Dendritic cell treated with granulocyte-macrophage colony-stimulating factor and Interleukin-4, amounts not matched to agents 40 ng/mL and 50 ng/mL, for 4 days (primary cell): ENCODE measurements at regions of chr7 and their contacts with region 1.

Region 1: DNA sequence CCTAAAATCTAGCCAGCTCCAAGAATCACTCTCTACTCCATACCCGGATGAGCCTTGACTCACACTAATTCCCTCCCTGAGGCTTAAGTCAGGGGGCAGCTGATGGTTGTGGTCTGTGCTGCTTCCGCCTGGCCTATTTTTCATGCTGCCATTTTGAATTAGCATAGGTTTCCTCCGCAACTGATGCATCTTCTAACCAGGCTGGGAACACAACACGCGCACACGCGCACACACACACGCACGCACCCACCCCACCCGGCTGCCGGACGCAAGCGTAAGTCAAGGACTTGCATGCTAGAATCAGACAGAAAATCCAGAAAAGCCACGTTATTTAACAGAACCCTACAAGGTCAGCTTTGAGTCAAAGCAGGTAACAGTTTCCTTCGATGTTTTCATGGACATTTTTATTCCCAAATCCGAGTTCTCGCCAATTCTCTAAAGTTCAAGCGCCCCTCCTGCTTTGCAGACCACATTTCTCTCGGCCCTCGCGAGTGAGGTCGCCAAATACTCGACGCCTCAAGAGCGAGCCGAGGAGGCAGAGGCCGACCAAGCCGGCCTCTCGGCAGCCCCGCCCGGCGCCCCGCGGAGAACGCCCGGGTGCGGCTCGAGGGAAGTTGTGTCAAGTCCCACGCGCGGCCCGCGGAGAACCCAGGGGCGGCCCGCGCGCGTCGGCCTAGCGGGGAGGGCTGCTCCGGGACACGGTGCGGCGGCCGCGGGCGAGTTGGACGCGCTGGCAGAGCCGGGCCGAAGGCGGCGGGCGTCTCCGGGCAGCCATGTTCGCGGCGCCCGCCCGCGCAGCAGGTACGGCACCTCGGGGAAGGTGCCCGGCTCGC is 961 bp downstream of the SCRN1 start:
- H3K4me3 Mint-ChIP-seq: peak overlapping the region; percentile 74
- H3K27ac Mint-ChIP-seq: peak overlapping the region; percentile 88
- H3K4me1 Mint-ChIP-seq: peaks cover 50% of the 10 kb centered on the region
- H3K27me3 Mint-ChIP-seq: peaks cover 9% of the 10 kb centered on the region

Region 2: GRCh38 chr7:29878081-29878688 is 110.5 kb before region 1 on chr7:
- intact Hi-C with region 1: no loop called
- H3K4me3 Mint-ChIP-seq: no peak overlapping the region
- H3K27ac Mint-ChIP-seq: no peak overlapping the region
- H3K4me1 Mint-ChIP-seq: peaks cover under 1% of the 10 kb centered on the region
- H3K27me3 Mint-ChIP-seq: peaks cover 9% of the 10 kb centered on the region

Region 3: DNA sequence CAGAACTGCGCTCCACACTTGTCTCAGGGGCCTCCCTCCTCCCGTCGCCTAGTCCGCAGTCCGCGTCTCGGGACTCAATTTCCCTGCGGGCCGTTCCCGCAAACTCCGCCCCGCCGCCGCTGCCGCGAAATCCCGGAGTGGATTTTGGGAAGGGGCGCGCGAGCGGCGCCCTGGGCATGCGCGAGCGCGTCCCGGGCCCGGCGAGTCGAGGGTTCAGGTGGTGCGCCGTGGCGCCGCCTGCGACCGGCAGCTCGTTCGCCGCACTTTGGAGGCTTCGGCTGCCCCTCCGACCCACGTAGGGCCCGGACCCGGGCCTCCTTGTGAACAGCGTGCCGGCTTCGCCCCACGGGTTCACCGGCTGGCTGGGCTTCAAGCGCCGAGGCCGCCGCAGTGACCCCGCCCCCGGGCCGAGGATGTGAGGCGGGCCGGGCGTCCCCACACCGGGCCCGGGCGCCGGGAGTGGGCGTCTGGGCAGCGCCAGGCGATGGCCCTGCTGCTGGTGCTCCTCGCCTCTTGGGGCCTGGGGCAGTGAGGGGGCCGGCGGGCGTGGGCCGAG is 39.6 kb after region 1 on chr7 and contains the start of gene PLEKHA8:
- intact Hi-C with region 1: loop called (anchors 2 kb)
- H3K4me3 Mint-ChIP-seq: peak within 1 kb of the TSS; percentile 87
- H3K27ac Mint-ChIP-seq: peak within 1 kb of the TSS; percentile 84
- H3K4me1 Mint-ChIP-seq: peaks cover 27% of the 10 kb centered on the region
- H3K27me3 Mint-ChIP-seq: no peaks in the 10 kb centered on the region